ENCODE measurements at regions of chr5 and their contacts with region 1.

Region 1: DNA sequence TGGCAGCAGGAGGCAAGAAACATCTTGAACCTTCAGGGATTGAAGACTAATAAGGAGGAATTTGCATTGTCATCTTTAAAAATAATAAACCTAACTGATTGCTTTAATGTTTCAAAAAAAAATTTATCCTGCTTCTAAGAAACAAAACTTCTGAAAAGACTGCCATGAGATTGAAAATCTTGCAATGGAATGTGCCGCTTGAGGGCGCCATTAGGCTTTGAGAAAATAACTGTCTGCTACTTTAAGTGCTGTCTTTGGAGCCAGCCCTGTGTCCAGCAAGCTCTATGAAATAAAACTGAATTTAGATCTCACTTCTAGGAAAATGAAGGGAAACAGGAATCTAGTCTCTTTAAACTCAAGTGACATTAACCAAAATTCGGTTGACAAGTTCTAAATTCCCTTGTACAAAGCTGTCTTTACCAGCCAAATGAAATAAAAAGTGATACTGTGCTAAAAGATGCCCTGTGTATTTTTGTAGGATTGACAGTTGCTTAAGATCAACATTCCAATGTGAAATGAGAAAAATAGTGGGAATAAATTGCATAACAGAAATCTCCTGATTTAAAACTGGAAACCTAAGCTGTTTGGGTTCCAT is 79.4 kb downstream of the ESM1 start:
- DNase-seq: peak; percentile 91
- H3K4me3 ChIP-seq: peak overlapping the region in 1 of 3 experiments; percentile 7
- H3K27ac ChIP-seq: no peak overlapping the region
- H3K4me1 ChIP-seq: peaks cover 39% of the 10 kb centered on the region
- H3K27me3 ChIP-seq: no peaks in the 10 kb centered on the region
- CTCF ChIP-seq: peak; percentile 59 to 63
- POLR2A ChIP-seq: no peak

Region 2: DNA sequence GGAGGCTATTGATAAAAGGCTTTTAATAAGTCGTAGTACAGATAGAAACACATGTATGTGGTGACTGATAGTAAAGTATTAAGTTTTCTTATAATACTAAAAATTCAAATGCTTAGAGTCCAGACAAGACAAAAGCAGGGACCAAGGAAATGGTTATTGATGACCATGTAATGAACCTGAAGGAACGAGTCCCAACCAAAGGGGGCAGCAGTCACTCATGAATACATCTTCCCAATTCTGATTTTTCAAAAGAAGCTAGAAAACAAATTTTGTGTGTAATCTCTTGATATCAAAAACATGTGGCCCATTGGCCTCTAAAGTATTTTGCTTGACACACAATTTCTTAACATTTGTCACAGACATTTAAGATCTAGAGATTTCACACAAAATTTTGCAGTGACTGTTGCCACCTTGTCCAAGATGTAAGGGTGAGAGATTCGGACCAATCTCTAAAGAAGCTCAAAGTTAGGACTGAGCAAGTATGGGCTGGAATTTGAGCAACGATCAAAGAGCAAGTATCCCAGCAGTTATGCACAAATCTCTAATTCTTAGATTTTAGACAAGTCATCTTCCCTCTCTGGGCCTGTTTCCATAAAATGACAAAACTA is 662.5 kb before region 1 on chr5:
- CTCF ChIA-PET with region 1: interaction called, 12 read pairs
- POLR2A ChIA-PET with region 1: no interaction called
- dilution Hi-C with region 1: no loop called
- intact Hi-C with region 1: no loop called
- DNase-seq: peak; percentile 47
- H3K4me3 ChIP-seq: no peak overlapping the region
- H3K27ac ChIP-seq: no peak overlapping the region
- H3K4me1 ChIP-seq: peaks cover 14% of the 10 kb centered on the region
- H3K27me3 ChIP-seq: peaks cover 0 to 1% of the 10 kb centered on the region in 2 experiments
- CTCF ChIP-seq: peak; percentile 44 to 48
- POLR2A ChIP-seq: no peak

Region 3: GRCh38 chr5:54774281-54775170 is 131.5 kb before region 1 on chr5:
- CTCF ChIA-PET with region 1: no interaction called
- POLR2A ChIA-PET with region 1: no interaction called
- dilution Hi-C with region 1: no loop called
- intact Hi-C with region 1: no loop called
- DNase-seq: peak; percentile 7
- H3K4me3 ChIP-seq: no peak overlapping the region
- H3K27ac ChIP-seq: no peak overlapping the region
- H3K4me1 ChIP-seq: no peaks in the 10 kb centered on the region
- H3K27me3 ChIP-seq: no peaks in the 10 kb centered on the region
- CTCF ChIP-seq: no peak
- POLR2A ChIP-seq: no peak

Region 4: GRCh38 chr5:54867310-54867944 is 38.6 kb before region 1 on chr5:
- CTCF ChIA-PET with region 1: interaction called, 16 read pairs
- POLR2A ChIA-PET with region 1: no interaction called
- dilution Hi-C with region 1: no loop called
- intact Hi-C with region 1: no loop called
- DNase-seq: peak; percentile 70
- H3K4me3 ChIP-seq: no peak overlapping the region
- H3K27ac ChIP-seq: no peak overlapping the region
- H3K4me1 ChIP-seq: no peaks in the 10 kb centered on the region
- H3K27me3 ChIP-seq: peaks cover 0 to 4% of the 10 kb centered on the region in 2 experiments
- CTCF ChIP-seq: peak; percentile 37 to 40
- POLR2A ChIP-seq: no peak

Region 5: DNA sequence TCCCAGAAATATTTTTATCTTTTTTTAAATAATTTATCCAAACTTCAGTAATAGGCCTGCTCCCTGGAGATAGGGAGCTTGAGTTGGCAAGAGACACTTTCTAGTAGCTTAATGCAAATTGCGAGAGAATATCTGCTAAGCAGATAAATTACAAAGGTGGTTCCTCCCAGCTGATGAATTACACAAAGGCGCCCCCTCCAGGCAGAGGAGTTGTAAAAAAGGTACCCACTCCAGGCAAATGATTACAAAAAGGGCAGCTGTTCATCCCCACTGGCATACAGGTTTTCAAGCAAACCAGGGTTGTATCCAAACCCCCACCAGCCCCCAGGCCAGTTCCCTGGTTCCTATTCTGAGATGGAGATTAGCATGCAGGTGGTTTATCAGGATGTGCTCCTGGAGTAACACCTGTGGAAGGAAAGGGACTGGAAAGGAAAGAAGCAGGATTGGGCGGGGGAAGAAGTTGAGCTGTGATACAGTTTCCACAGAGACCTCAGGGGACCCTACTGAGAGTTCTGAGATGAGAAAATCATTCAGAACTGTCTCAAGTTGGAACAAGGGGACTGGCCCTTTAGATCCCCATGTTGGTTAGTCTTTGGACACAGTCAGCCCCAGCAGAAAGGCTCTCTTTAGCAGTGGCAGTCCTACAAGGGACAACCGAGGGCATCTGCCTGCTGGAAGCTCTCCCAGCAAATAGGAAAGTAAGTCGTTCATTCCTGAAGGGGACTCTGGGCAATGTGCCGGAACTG is 53.8 kb after region 1 on chr5:
- CTCF ChIA-PET with region 1: interaction called, 68 read pairs
- POLR2A ChIA-PET with region 1: no interaction called
- dilution Hi-C with region 1: no loop called
- intact Hi-C with region 1: loop called (anchors 2 kb)
- DNase-seq: peak; percentile 57
- H3K4me3 ChIP-seq: no peak overlapping the region
- H3K27ac ChIP-seq: no peak overlapping the region
- H3K4me1 ChIP-seq: peaks cover 2% of the 10 kb centered on the region
- H3K27me3 ChIP-seq: no peaks in the 10 kb centered on the region
- CTCF ChIP-seq: peak; percentile 50
- POLR2A ChIP-seq: no peak

Region 6: DNA sequence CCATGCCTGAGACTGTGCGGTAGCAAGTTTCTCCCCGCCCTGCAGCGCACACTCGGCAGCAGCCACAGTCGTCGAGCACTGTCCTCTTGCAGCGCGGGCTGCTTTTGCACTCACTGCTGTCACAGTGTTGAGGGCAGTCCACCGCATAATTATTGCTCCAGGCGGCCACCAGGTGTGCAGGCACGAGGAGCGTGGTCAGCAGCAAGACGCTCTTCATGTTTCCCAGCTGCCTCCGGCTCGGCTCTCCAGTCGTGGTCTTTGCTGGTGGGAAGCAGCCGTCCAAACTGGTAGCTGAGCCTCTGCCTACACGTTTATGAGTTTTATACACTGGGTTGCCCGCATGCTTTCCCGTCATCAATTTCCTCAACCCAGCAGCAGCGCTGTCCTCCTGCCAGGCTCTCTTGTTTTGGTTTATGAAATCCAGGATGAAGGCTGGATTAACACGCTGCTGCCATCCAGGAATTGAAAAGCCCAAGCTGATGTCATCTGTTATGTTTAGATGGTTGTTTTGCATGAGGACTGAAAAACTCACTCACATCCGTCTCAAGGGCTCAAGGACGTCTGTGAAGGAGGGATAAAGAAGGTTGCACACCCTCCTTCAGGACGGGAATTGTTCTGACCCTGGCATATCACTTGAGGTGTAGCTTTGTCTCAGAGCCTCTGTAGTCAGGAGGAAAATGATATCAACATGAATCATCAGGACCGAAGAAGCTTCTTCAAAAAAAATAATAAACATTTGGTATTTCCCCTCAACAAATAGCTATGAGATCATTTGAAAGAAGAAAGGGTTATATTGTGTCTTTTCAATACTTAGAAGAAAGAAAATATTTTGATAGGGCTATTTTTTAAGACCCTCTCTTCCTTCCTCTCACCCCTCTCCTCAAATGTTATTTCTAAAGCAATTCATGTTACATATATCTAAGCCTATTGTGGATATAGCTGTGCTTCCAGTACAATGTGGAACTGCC is 79.5 kb after region 1 on chr5 and contains the start of gene ESM1:
- CTCF ChIA-PET with region 1: interaction called, 78 read pairs
- POLR2A ChIA-PET with region 1: no interaction called
- dilution Hi-C with region 1: no loop called
- intact Hi-C with region 1: loop called (anchors 1 kb)
- DNase-seq: peak; percentile 99
- H3K4me3 ChIP-seq: peak within 1 kb of the TSS; percentile 69 to 99 (median 97)
- H3K27ac ChIP-seq: peak within 1 kb of the TSS; percentile 99
- H3K4me1 ChIP-seq: peaks cover 45% of the 10 kb centered on the region
- H3K27me3 ChIP-seq: no peaks in the 10 kb centered on the region
- CTCF ChIP-seq: peak; percentile 28 to 34
- POLR2A ChIP-seq: peak; percentile 92
- total RNA-seq, gene ESM1: 577 and 781 TPM in 2 replicates

Region 7: GRCh38 chr5:55151923-55152842 is 246.1 kb after region 1 on chr5:
- CTCF ChIA-PET with region 1: interaction called, 37 read pairs
- POLR2A ChIA-PET with region 1: no interaction called
- dilution Hi-C with region 1: no loop called
- intact Hi-C with region 1: loop called (anchors 1 kb)
- DNase-seq: peak; percentile 40
- H3K4me3 ChIP-seq: no peak overlapping the region
- H3K27ac ChIP-seq: peak overlapping the region; percentile 35
- H3K4me1 ChIP-seq: peaks cover 40% of the 10 kb centered on the region
- H3K27me3 ChIP-seq: no peaks in the 10 kb centered on the region
- CTCF ChIP-seq: no peak
- POLR2A ChIP-seq: no peak